Activated B cell treated with CpG ODN at 0.5 μM for 24 hours (primary cell): ENCODE measurements at regions of chr11 and their contacts with region 1.

Region 1: DNA sequence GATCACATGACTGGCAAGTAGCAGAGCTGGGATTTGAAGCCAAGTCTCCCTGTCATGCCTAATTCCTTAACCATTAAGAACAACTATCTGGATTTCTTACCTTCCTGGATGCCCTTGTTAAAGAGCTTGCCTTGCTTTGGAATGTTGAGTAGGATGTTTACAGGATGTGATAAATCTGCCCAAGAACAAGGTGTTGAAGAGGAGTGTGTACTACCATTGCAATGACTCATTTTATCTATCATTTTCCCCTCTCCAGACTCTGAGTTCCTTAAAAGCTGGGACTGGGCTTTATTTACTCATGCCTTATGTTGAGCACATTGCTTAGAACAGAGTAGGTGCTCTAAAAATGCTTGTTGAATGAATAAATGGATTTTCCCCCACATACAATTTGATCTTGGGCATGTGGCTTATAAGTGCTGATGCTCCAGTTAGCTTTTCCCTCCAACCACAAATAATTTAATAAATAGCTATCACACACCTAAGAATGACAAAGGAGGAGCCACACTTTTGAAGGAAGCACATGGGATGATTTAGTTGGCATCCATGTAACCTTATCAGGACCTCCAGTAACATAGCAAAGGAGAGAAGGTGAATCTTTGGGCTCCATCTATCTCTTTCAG is 268.6 kb upstream of the SESN3 start:
- DNase-seq: no peak
- ATAC-seq: no peak
- H3K4me3 Mint-ChIP-seq: no peak overlapping the region
- H3K27ac Mint-ChIP-seq: no peak overlapping the region
- H3K4me1 Mint-ChIP-seq: no peaks in the 10 kb centered on the region
- H3K27me3 Mint-ChIP-seq: no peaks in the 10 kb centered on the region
- CTCF ChIP-seq: no peak

Region 2: GRCh38 chr11:95459291-95460042 is 40.2 kb before region 1 on chr11:
- CTCF ChIA-PET with region 1: no interaction called
- POLR2A ChIA-PET with region 1: no interaction called
- intact Hi-C with region 1: loop called (anchors 5 kb)
- DNase-seq: no peak
- ATAC-seq: no peak
- H3K4me3 Mint-ChIP-seq: no peak overlapping the region
- H3K27ac Mint-ChIP-seq: no peak overlapping the region
- H3K4me1 Mint-ChIP-seq: peaks cover 34% of the 10 kb centered on the region
- H3K27me3 Mint-ChIP-seq: no peaks in the 10 kb centered on the region
- CTCF ChIP-seq: no peak